ENCODE measurements at regions of chr6 and their contacts with region 1.

Region 1: GRCh38 chr6:44475779-44476434 is 88.4 kb downstream of the CDC5L start:
- DNase-seq: no peak
- H3K4me3 ChIP-seq: no peak overlapping the region
- CTCF ChIP-seq: peak; percentile 94

Region 2: DNA sequence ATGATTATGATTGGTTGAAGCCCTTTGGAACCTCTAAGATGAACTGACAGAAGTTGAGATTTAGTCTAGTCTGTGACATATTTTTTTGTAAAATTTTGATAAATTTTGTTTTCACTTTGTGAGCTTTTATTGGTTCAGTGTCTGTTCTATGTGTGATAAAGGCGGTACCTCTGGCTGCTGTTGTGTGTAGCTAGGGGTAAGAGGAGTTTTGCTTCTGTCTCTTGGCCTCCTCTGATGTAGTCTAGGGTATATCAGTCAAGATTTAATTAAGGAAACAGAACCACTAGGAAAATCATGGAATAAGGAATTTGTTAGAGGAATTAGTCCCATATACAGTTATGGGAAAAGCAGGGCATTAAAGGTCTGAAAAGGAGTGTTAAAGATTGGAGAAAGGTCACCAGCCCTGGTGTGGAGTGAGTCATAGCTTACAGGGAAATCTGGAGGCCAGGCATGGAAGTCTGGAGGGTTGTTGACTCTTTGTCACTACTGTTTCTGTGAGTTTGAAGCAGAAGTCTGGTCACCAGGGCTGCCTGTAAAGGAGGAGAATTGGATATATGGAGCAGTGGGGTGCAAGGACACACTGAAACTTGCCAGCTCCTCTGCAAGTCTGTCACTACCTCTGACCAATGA is 59.9 kb before region 1 on chr6:
- CTCF ChIA-PET with region 1: no interaction called
- POLR2A ChIA-PET with region 1: no interaction called
- DNase-seq: no peak
- H3K4me3 ChIP-seq: no peak overlapping the region
- CTCF ChIP-seq: no peak

Region 3: GRCh38 chr6:44431118-44431725 is 44.7 kb before region 1 on chr6:
- CTCF ChIA-PET with region 1: interaction called, 39 read pairs
- POLR2A ChIA-PET with region 1: no interaction called
- DNase-seq: no peak
- H3K4me3 ChIP-seq: no peak overlapping the region
- CTCF ChIP-seq: peak; percentile 51

Region 4: GRCh38 chr6:44489910-44490604 is 14.2 kb after region 1 on chr6:
- CTCF ChIA-PET with region 1: interaction called, 120 read pairs
- POLR2A ChIA-PET with region 1: no interaction called
- DNase-seq: peak; percentile 88
- H3K4me3 ChIP-seq: peak overlapping the region; percentile 27; the same call in 1 of the 2 replicates
- CTCF ChIP-seq: no peak

Region 5: GRCh38 chr6:44614396-44614795 is 138.5 kb after region 1 on chr6:
- CTCF ChIA-PET with region 1: interaction called, 18 read pairs
- POLR2A ChIA-PET with region 1: no interaction called
- DNase-seq: no peak
- H3K4me3 ChIP-seq: no peak overlapping the region
- CTCF ChIP-seq: no peak

Region 6: GRCh38 chr6:44655412-44656342 is 179.8 kb after region 1 on chr6:
- CTCF ChIA-PET with region 1: interaction called, 153 read pairs
- POLR2A ChIA-PET with region 1: no interaction called
- DNase-seq: no peak
- H3K4me3 ChIP-seq: no peak overlapping the region
- CTCF ChIP-seq: peak; percentile 92

Region 7: GRCh38 chr6:45421709-45422502 is 946.0 kb after region 1 on chr6:
- CTCF ChIA-PET with region 1: interaction called, 11 read pairs
- POLR2A ChIA-PET with region 1: no interaction called
- DNase-seq: no peak
- H3K4me3 ChIP-seq: peak overlapping the region; percentile 96
- CTCF ChIP-seq: peak; percentile 55

Region 8: DNA sequence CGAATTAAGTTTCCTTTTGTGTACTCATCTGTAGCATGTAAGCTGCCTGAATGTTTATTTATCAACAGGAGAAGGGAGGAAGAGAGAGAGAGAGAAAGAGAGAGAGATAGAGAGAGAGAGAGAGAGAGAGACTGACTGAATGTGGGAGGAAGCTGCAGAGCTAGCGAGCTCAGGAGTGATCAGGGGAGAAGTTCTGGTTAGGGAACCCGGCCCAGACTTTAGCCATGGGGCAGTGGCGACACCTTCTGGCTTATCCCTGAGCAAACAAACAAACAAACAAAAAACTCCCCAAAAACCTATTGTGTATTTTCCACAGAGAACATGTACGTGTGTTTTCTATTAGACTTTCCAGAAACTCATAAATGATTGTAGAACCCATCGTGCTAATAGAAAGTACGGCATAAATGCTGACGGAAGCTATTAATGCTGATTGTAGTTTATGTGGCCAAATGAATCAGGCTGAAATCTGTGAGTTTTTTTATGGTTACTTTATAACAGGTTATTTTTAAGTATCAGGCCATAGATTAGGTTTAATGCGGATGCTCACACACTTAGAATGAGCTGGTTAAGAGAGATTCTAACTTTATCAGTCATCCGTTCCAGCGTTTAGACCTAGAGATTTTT is 1446.9 kb after region 1 on chr6:
- CTCF ChIA-PET with region 1: interaction called, 58 read pairs
- POLR2A ChIA-PET with region 1: no interaction called
- DNase-seq: peak; percentile 67
- H3K4me3 ChIP-seq: no peak overlapping the region
- CTCF ChIP-seq: peak; percentile 68

Measured in AG04449 (cell line).